Activated T-helper 1 cell treated with anti-CD3 and anti-CD28 coated beads, Interleukin-12 subunit alpha, Interleukin-12 subunit beta, Interleukin-2, Interleukin-4 antibody, amounts not matched to agents 30 ng/mL and 10 ng/mL and 1 ng/mL, durations not matched to agents 14 hours and 24 hours and 36 hours (primary cell): ENCODE measurements at regions of chr22 and their contacts with region 1.

Region 1: DNA sequence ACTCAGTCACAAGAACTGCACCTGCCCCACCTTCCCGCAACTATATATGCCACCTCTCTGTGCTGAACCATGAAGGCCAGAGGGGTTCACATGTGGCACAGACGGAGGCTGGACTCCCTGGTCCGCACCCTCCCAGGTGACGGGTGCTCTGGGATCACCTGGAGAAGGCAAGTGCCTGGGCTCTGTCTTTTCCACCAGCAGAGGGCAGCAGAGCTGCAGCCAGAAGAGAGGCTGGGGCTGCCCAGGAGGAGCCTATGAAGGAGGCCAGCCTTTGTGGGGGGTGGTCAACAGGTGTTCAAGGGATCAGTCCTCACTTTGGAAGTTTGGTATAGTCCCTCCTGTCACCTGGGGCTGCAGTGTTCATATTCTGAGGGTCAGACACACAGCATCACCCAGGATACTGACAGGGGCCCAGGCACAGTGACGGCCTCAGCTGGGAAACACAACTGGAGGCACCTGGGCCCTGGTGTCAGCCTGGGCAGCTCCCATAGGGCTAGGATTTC is 39.2 kb upstream of the IGLL5 start:
- DNase-seq: peak; percentile 49
- H3K4me3 Mint-ChIP-seq: no peak overlapping the region
- H3K27ac Mint-ChIP-seq: no peak overlapping the region
- H3K4me1 Mint-ChIP-seq: peaks cover 6% of the 10 kb centered on the region
- H3K27me3 Mint-ChIP-seq: peaks cover 43% of the 10 kb centered on the region

Region 2: GRCh38 chr22:22802339-22802970 is 46.0 kb before region 1 on chr22:
- intact Hi-C with region 1: loop called (anchors 2 kb)
- DNase-seq: peak; percentile 22
- H3K4me3 Mint-ChIP-seq: no peak overlapping the region
- H3K27ac Mint-ChIP-seq: no peak overlapping the region
- H3K4me1 Mint-ChIP-seq: no peaks in the 10 kb centered on the region
- H3K27me3 Mint-ChIP-seq: peaks cover 32% of the 10 kb centered on the region

Region 3: DNA sequence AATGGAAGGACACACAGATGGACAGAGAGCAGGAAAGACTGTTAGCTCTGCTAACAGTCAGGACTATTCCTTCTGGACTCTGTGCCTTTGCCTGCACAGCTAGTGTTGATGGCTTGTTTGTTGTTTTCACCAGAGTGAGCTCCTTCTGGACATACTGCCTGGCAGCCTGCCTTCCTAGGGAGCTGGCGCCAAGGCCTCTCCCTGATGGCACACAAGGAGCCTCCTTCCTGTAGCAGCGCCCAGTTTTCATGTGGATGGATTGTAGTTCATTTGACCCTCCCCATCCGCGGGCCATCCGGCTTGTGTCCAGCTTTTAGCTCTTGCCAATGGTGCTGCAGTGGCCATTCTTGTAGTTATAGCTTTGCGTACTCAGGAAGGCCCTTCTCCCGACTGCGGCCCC is 315.2 kb after region 1 on chr22:
- intact Hi-C with region 1: no loop called
- DNase-seq: no peak
- H3K4me3 Mint-ChIP-seq: no peak overlapping the region
- H3K27ac Mint-ChIP-seq: no peak overlapping the region
- H3K4me1 Mint-ChIP-seq: no peaks in the 10 kb centered on the region
- H3K27me3 Mint-ChIP-seq: peaks cover 11% of the 10 kb centered on the region